ENCODE measurements at regions of chr10 and their contacts with region 1.

Region 1: GRCh38 chr10:109978481-109978880 is 29.3 kb upstream of the ADD3 start:
- DNase-seq: peak; percentile 31 to 75 (median 71)
- ATAC-seq: peak; percentile 70
- H3K4me3 ChIP-seq: no peak overlapping the region
- H3K4me3 Mint-ChIP-seq: no peak overlapping the region
- H3K27ac ChIP-seq: no peak overlapping the region
- H3K27ac Mint-ChIP-seq: no peak overlapping the region
- H3K4me1 ChIP-seq: peaks cover 7% of the 10 kb centered on the region
- H3K4me1 Mint-ChIP-seq: peaks cover 16% of the 10 kb centered on the region
- H3K27me3 ChIP-seq: no peaks in the 10 kb centered on the region
- H3K27me3 Mint-ChIP-seq: no peaks in the 10 kb centered on the region
- CTCF ChIP-seq: peak; percentile 91

Region 2: GRCh38 chr10:109934958-109935706 is 43.3 kb before region 1 on chr10:
- CTCF ChIA-PET with region 1: interaction called, 12 read pairs
- POLR2A ChIA-PET with region 1: interaction called, 7 read pairs
- intact Hi-C with region 1: no loop called
- DNase-seq: peak in 4 of 9 experiments; percentile 15 to 56 (median 36)
- ATAC-seq: peak; percentile 32
- H3K4me3 ChIP-seq: peak overlapping the region in 1 of 2 experiments; percentile 2
- H3K4me3 Mint-ChIP-seq: peak overlapping the region; percentile 77
- H3K27ac ChIP-seq: peak overlapping the region; percentile 33 to 70
- H3K27ac Mint-ChIP-seq: peak overlapping the region; percentile 96
- H3K4me1 ChIP-seq: peaks cover 68% of the 10 kb centered on the region
- H3K4me1 Mint-ChIP-seq: peaks cover 74% of the 10 kb centered on the region
- H3K27me3 ChIP-seq: no peaks in the 10 kb centered on the region
- H3K27me3 Mint-ChIP-seq: no peaks in the 10 kb centered on the region
- CTCF ChIP-seq: no peak

Region 3: GRCh38 chr10:110016039-110016438 is 37.6 kb after region 1 on chr10:
- CTCF ChIA-PET with region 1: interaction called, 19 read pairs
- POLR2A ChIA-PET with region 1: no interaction called
- intact Hi-C with region 1: loop called in 1 of 2 experiments (anchors 1 kb)
- DNase-seq: peak in 2 of 9 experiments; percentile 39 to 52
- ATAC-seq: no peak
- H3K4me3 ChIP-seq: no peak overlapping the region
- H3K4me3 Mint-ChIP-seq: peak overlapping the region; percentile 42
- H3K27ac ChIP-seq: no peak overlapping the region
- H3K27ac Mint-ChIP-seq: peak overlapping the region; percentile 56
- H3K4me1 ChIP-seq: peaks cover 90% of the 10 kb centered on the region
- H3K4me1 Mint-ChIP-seq: peaks cover 87% of the 10 kb centered on the region
- H3K27me3 ChIP-seq: no peaks in the 10 kb centered on the region
- H3K27me3 Mint-ChIP-seq: no peaks in the 10 kb centered on the region
- CTCF ChIP-seq: peak; percentile 16

Region 4: DNA sequence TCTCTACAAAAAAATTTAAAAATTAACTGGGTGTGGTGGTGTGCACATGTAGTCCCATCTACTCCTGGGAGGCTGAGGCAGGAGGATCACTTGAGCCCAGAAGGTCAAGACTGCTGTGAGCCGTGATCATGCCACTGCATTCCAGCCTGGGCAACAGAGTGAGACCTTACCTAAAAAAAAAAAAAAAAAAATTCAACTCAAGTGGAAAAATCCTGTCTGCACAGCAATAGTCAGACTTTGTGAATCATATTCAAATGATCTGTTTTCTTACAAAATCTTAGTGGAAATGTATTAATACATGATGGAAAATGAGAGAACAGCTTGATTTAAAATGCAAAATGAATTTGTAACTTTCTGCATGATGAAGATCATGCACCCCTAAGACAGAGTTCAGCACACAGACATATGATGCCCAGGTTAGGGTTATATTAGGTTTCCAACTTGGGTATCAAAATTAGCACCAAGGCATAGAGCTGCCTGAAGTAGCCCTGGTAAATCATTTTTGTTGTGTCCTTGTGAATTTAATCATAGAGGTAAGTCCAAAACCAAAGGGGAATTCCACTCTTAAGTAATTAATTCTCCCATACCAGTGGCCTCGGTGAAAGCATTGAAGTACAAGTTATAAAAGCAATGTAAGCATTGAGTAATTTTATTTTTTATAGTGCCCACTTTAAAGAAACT is 123.1 kb after region 1 on chr10:
- CTCF ChIA-PET with region 1: no interaction called
- POLR2A ChIA-PET with region 1: no interaction called
- intact Hi-C with region 1: loop called in 1 of 2 experiments (anchors 2 kb)
- DNase-seq: no peak
- ATAC-seq: no peak
- H3K4me3 ChIP-seq: no peak overlapping the region
- H3K4me3 Mint-ChIP-seq: no peak overlapping the region
- H3K27ac ChIP-seq: no peak overlapping the region
- H3K27ac Mint-ChIP-seq: peak overlapping the region; percentile 14
- H3K4me1 ChIP-seq: peaks cover 24% of the 10 kb centered on the region
- H3K4me1 Mint-ChIP-seq: peaks cover 55% of the 10 kb centered on the region
- H3K27me3 ChIP-seq: no peaks in the 10 kb centered on the region
- H3K27me3 Mint-ChIP-seq: no peaks in the 10 kb centered on the region
- CTCF ChIP-seq: no peak